ENCODE measurements at regions of chr9 and their contacts with region 1.

Region 1: DNA sequence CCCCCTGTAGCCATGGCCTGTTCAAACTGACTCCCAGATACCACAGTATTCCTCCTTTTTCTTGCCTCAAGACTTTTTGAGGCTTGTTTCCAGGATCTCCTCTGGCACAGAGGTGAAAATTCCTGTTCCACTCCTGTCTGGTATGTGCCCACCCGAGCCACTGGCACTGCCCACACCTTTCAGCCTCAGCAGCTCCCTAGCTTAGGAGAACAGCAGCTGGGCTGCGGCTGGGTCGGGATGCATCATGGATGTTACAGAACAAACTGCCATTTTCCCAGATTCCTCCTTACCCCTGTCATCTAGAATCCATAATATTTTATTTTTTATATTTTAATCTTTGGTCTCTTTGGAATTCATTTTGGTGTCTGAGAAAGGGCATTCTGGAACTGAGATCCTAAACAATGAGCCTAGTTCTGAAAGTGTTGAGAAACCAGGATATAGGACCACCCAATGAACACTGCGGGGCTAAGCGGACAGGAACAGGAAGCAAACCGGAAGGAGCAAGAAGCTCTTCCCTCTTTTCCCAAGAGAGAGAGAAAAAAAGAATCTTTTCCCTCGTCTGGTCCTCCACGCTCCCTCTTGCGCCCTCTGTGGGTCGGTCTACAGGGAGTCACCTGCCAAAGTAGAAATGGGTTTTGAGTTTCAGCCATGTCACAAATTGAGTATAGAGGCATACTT is 12.5 kb downstream of the OR2S2 start:
- DNase-seq: peak; percentile 89
- ATAC-seq: peak; percentile 86 to 91

Region 2: GRCh38 chr9:34578241-34579103 is 1367.0 kb before region 1 on chr9:
- intact Hi-C with region 1: no loop called
- DNase-seq: no peak
- ATAC-seq: peak; percentile 61 to 73

Region 3: DNA sequence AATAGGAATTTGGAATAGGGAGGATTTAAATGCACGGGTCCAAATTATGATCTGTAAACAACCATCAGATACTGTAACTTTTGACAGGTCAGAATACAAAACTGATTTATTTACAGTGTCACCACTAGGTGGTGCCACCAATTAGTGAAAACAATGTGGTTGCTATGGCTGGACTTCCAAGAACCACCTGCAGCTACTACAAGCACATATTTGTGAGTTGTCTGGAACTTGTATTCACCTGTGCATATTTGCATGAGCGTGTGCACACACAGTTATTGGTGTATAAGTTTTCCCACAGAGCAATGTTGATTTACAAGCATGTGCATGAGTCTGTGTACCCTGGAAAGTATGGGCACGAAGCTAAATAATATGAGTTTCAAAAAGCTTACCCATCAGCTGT is 42.4 kb before region 1 on chr9:
- intact Hi-C with region 1: loop called (anchors 2 to 5 kb)
- DNase-seq: no peak
- ATAC-seq: no peak

Measured in left cardiac atrium (tissue), 4 donors.